ENCODE measurements at regions of chr16 and their contacts with region 1.

Region 1: DNA sequence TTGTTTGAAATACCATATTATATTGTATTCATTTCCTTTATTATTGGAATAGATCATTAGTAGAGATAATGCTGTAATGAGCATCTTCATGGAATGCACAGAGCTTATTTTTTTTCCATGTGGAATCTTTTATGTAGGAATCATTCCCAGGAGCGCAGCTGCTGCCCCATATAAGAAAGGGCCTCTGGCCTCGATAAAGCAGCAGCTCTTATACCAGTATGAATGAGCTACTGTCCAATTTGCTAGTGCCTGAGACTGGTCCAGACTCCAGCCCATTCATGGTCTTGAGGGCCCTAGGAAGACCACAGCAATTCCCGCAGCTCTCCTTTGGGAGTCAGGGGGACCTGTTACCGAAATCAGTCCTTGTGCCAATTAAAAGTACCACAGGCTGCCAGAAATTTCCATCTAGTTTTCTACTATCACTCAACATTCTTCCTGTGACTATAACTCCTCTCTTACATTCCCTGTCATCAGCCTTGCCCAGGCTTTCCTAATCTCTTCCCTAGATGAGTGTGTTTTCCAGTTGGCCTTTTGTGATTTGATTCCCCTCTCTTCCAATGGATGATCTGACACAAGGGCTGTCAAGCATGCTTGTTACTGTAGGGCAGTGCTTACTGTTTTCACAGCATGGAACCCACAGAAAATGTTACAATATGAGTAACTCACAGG is 1.9 kb downstream of the ZNF843 start:
- DNase-seq: no peak
- ATAC-seq: no peak
- H3K4me3 ChIP-seq: no peak overlapping the region
- H3K27ac ChIP-seq: no peak overlapping the region
- H3K4me1 ChIP-seq: peaks cover 6% of the 10 kb centered on the region; the same call in 1 of the 2 replicates
- H3K27me3 ChIP-seq: peaks cover 0 to 17% of the 10 kb centered on the region in 2 experiments; a peak in 2 of 5 replicates
- CTCF ChIP-seq: no peak
- EP300 ChIP-seq: no peak
- POLR2A ChIP-seq: no peak
- RAD21 ChIP-seq: no peak

Region 2: GRCh38 chr16:31202414-31203375 is 238.0 kb before region 1 on chr16 and contains the start of gene PYCARD:
- CTCF ChIA-PET with region 1: no interaction called
- POLR2A ChIA-PET with region 1: no interaction called
- in situ Hi-C with region 1: loop called (anchors 25 kb)
- intact Hi-C with region 1: loop called (anchors 5 kb)
- DNase-seq: no peak
- ATAC-seq: peak; percentile 23
- H3K4me3 ChIP-seq: peak within 1 kb of the TSS; percentile 61 to 77 (median 61)
- H3K27ac ChIP-seq: no peak within 1 kb of the TSS
- H3K4me1 ChIP-seq: peaks cover 57% of the 10 kb centered on the region
- H3K27me3 ChIP-seq: peaks cover 0 to 35% of the 10 kb centered on the region in 2 experiments; a peak in 4 of 5 replicates
- CTCF ChIP-seq: no peak
- EP300 ChIP-seq: no peak
- POLR2A ChIP-seq: peak in 1 of 2 experiments; percentile 38; a peak in 2 of 4 replicates
- RAD21 ChIP-seq: peak; percentile 19; the same call in 1 of the 2 replicates
- total RNA-seq, gene PYCARD: 4.4 and 4.8 TPM in 2 replicates

Region 3: GRCh38 chr16:31382485-31383161 is 58.0 kb before region 1 on chr16:
- CTCF ChIA-PET with region 1: no interaction called
- POLR2A ChIA-PET with region 1: no interaction called
- in situ Hi-C with region 1: no loop called
- intact Hi-C with region 1: loop called (anchors 1 kb)
- DNase-seq: peak; percentile 42
- ATAC-seq: peak; percentile 90
- H3K4me3 ChIP-seq: no peak overlapping the region
- H3K27ac ChIP-seq: no peak overlapping the region
- H3K4me1 ChIP-seq: peaks cover 9% of the 10 kb centered on the region
- H3K27me3 ChIP-seq: peaks cover 1 to 6% of the 10 kb centered on the region in 2 experiments; a peak in 3 of 5 replicates
- CTCF ChIP-seq: peak; percentile 90
- EP300 ChIP-seq: no peak
- POLR2A ChIP-seq: no peak
- RAD21 ChIP-seq: peak; percentile 75